ENCODE measurements at regions of chr11 and their contacts with region 1.

Region 1: DNA sequence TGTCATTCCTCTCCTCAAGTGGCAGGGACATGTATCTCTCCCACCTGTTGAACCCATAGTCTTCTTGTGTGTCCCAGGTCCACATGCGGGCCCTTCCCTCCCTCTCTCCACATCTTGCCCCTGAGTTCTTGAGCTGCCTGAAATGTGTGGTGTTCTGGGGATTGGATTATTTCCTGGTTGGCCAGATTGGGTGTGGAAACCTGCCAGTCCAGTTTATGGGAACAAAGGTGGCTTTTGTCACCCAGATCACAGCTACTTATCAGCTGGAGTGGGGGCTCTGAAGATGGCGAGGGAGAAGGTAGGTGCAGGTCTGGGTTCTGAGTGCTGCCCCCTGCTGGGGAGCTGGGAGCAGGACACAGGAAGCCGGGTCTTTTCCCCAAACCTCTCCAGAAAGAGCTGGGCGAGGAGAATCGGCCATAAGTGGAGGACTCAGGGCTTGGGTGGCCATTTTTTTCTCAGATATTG is 14.2 kb downstream of the DTX4 start:
- DNase-seq: peak; percentile 88 to 98
- H3K4me3 ChIP-seq: peak overlapping the region; percentile 52
- H3K27ac ChIP-seq: peak overlapping the region; percentile 81
- H3K4me1 ChIP-seq: peaks cover 84% of the 10 kb centered on the region
- H3K27me3 ChIP-seq: no peaks in the 10 kb centered on the region
- CTCF ChIP-seq: peak; percentile 98

Region 2: GRCh38 chr11:59142530-59143507 is 43.3 kb before region 1 on chr11 and contains the start of gene FAM111A:
- CTCF ChIA-PET with region 1: no interaction called
- POLR2A ChIA-PET with region 1: no interaction called
- intact Hi-C with region 1: loop called (anchors 5 kb)
- DNase-seq: peak; percentile 91 to 94
- H3K4me3 ChIP-seq: peak within 1 kb of the TSS; percentile 72
- H3K27ac ChIP-seq: peak within 1 kb of the TSS; percentile 61
- H3K4me1 ChIP-seq: peaks cover 37% of the 10 kb centered on the region
- H3K27me3 ChIP-seq: no peaks in the 10 kb centered on the region
- CTCF ChIP-seq: no peak; the same call in 1 of the 2 replicates
- total RNA-seq, gene FAM111A: 57.8 and 95.3 TPM in 2 replicates

Region 3: DNA sequence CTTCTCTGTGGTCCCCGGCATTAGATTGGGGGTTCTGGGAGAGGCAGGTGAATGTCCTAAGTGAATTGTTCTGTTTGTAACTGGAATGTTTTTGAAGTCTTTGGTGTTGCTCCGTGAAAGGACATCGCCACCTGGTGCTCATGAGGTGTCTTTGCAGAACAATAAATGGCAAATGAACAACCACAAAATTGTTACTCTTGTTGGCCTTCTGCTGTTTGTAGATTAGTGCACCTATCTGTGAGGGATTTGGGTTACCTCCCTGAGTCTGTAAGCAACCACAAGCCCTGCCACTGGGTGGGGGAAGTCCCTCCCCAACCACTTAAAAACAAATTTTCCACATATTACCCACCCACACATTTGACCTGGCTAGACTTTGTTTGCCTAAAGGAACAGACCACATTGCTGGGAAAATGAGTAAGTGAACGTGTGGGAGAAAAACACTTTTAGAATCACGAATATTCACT is 21.9 kb after region 1 on chr11:
- CTCF ChIA-PET with region 1: interaction called, 4 read pairs
- POLR2A ChIA-PET with region 1: no interaction called
- intact Hi-C with region 1: loop called (anchors 1 kb)
- DNase-seq: peak; percentile 26 to 62
- H3K4me3 ChIP-seq: no peak overlapping the region
- H3K27ac ChIP-seq: no peak overlapping the region
- H3K4me1 ChIP-seq: no peaks in the 10 kb centered on the region
- H3K27me3 ChIP-seq: no peaks in the 10 kb centered on the region
- CTCF ChIP-seq: peak; percentile 85

Region 4: GRCh38 chr11:59273373-59273841 is 87.2 kb after region 1 on chr11:
- CTCF ChIA-PET with region 1: no interaction called
- POLR2A ChIA-PET with region 1: interaction called, 11 read pairs
- intact Hi-C with region 1: no loop called
- DNase-seq: peak in 1 of 2 experiments; percentile 94
- H3K4me3 ChIP-seq: no peak overlapping the region
- H3K27ac ChIP-seq: peak overlapping the region; percentile 65
- H3K4me1 ChIP-seq: peaks cover 50% of the 10 kb centered on the region
- H3K27me3 ChIP-seq: no peaks in the 10 kb centered on the region
- CTCF ChIP-seq: no peak